ENCODE measurements at regions of chr13 and their contacts with region 1.

Region 1: DNA sequence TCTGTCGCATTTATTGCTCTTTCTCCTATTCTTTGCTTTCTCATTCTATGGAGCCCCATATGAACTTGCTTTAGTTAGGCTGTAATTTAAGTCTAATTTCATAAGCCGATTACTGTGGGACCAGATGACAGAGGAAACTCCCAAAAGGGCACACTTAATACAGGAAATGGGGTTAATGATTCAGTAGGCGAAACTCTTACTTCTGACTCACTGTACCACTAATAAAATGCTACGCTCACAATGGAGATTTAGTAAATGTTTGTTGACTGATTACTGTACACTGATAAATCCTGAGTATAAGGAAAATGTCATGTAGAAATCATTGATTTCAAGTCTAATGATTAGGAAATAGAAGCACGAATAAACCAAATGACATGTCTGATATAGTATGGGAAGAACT is 276.4 kb downstream of the KLF5 start:
- DNase-seq: peak; percentile 95
- H3K4me3 ChIP-seq: no peak overlapping the region
- H3K27ac ChIP-seq: peak overlapping the region; percentile 100
- H3K4me1 ChIP-seq: peaks cover 48% of the 10 kb centered on the region
- H3K27me3 ChIP-seq: no peaks in the 10 kb centered on the region
- CTCF ChIP-seq: no peak

Region 2: DNA sequence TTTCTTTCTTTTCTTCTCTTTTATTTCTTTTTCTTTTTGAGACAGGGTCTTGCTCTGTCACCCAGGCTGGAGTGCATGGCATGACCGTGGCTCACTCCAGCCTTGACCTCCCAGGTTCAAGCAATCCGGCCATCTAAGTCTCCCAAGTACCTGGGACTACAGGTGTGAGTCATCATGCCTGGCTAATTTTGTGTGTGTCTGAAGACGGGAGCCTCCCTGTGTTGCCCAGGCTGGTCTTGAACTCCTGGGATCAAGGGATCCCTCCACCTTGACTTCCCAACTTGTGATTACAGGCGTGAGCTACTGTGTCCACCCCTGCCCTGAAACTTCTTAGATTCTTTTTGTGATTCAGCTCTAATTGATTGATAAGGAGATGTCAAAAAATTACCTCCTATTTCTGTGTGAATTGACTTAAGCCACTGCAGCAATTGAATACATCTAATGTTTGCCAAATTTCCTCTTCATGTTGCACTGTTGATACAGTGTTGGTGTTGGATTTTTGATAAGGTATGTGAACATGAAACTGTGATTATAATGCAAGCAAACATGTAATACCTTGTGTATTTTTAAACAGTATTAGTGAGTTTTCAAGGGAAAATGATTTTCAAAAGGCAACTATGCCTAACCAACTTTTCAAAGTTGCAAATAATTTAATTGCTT is 253.8 kb before region 1 on chr13:
- CTCF ChIA-PET with region 1: no interaction called
- dilution Hi-C with region 1: no loop called
- in situ Hi-C with region 1: loop called in 1 of 2 experiments (anchors 25 kb)
- intact Hi-C with region 1: loop called (anchors 5 kb)
- DNase-seq: peak; percentile 45
- H3K4me3 ChIP-seq: no peak overlapping the region
- H3K27ac ChIP-seq: peak overlapping the region; percentile 11
- H3K4me1 ChIP-seq: peaks cover 8% of the 10 kb centered on the region
- H3K27me3 ChIP-seq: no peaks in the 10 kb centered on the region
- CTCF ChIP-seq: no peak

Region 3: GRCh38 chr13:73228546-73228945 is 106.7 kb before region 1 on chr13:
- CTCF ChIA-PET with region 1: no interaction called
- dilution Hi-C with region 1: no loop called
- in situ Hi-C with region 1: loop called in 1 of 2 experiments (anchors 10 kb)
- intact Hi-C with region 1: loop called (anchors 1 kb)
- DNase-seq: peak; percentile 45
- H3K4me3 ChIP-seq: no peak overlapping the region
- H3K27ac ChIP-seq: peak overlapping the region; percentile 9
- H3K4me1 ChIP-seq: peaks cover 27% of the 10 kb centered on the region
- H3K27me3 ChIP-seq: no peaks in the 10 kb centered on the region
- CTCF ChIP-seq: peak; percentile 25 to 48

Region 4: DNA sequence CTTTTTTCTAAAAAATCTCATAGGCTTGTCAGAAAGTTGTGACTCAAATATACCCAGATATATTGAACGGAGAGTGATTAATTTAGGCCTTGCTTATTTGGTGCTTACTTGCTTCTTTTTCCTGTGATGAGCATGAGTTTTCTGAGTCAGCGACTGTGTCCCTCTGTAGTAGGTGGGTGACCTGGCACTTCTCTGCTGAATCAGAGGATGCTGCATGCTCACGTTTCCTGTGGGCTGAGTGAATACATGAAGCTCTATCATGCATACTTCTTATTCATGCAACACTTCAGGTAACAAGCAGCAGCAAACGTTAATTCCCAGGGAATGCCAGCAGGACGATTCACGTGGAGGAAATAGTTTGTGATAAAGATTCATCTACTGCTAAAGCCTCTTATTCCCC is 31.4 kb before region 1 on chr13:
- CTCF ChIA-PET with region 1: no interaction called
- dilution Hi-C with region 1: no loop called
- in situ Hi-C with region 1: no loop called
- intact Hi-C with region 1: loop called (anchors 2 kb)
- DNase-seq: peak; percentile 92
- H3K4me3 ChIP-seq: no peak overlapping the region
- H3K27ac ChIP-seq: peak overlapping the region; percentile 52
- H3K4me1 ChIP-seq: peaks cover 13% of the 10 kb centered on the region
- H3K27me3 ChIP-seq: no peaks in the 10 kb centered on the region
- CTCF ChIP-seq: no peak

Region 5: DNA sequence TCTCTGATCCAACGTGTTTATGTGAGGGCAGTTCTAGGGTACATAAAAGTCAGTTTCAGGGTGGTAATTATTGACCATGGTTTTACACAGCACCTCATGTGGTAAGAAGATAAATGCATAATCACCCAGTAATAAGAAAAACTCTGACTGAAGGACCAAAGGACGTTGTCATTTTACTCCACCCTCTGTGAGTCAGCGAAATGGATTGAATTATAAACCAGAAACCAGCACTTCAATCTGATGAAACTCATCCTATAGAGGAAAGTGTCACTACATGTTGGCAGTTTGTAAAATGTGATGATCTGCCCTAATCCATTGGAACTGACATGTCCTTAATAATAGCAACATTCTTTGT is 130.4 kb after region 1 on chr13:
- CTCF ChIA-PET with region 1: no interaction called
- dilution Hi-C with region 1: no loop called
- in situ Hi-C with region 1: no loop called
- intact Hi-C with region 1: loop called (anchors 2 kb)
- DNase-seq: peak; percentile 96
- H3K4me3 ChIP-seq: no peak overlapping the region
- H3K27ac ChIP-seq: peak overlapping the region; percentile 94
- H3K4me1 ChIP-seq: peaks cover 31% of the 10 kb centered on the region
- H3K27me3 ChIP-seq: no peaks in the 10 kb centered on the region
- CTCF ChIP-seq: peak; percentile 11 to 34

Region 6: DNA sequence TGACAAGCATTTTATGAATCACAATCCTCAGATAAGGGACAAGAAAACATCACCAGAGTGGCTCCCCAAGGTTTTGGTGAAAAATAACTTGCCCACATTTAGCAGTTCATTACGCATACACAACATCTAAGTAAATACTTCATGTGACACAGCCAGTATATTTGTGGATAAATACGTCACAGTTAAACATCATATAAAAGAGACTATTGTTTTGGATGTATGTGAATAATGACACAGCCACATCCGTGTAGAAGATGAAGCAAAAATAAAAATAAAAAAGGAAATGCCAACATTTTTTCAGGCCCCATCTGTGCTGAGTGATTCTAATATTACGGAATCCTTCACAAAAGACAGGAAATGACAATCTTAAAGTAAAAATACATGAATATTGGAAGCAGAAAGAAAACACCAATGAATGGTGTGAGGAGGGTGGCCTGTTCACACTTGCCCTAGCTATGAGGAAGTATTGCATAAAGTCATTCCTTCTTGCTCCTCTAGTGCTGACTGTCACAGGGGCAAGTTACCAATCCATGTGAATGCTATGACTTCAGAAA is 341.9 kb after region 1 on chr13:
- CTCF ChIA-PET with region 1: no interaction called
- dilution Hi-C with region 1: no loop called
- in situ Hi-C with region 1: no loop called
- intact Hi-C with region 1: loop called (anchors 1 kb)
- DNase-seq: peak; percentile 95
- H3K4me3 ChIP-seq: no peak overlapping the region
- H3K27ac ChIP-seq: peak overlapping the region; percentile 98
- H3K4me1 ChIP-seq: peaks cover 18% of the 10 kb centered on the region
- H3K27me3 ChIP-seq: no peaks in the 10 kb centered on the region
- CTCF ChIP-seq: no peak